ENCODE measurements at regions of chr3 and their contacts with region 1.

Region 1: GRCh38 chr3:193114431-193115340 is 126.3 kb upstream of the PLAAT1 start:
- DNase-seq: no peak
- H3K4me3 ChIP-seq: no peak overlapping the region
- H3K27ac ChIP-seq: no peak overlapping the region
- H3K4me1 ChIP-seq: peaks cover 0 to 5% (median 1%) of the 10 kb centered on the region in 4 experiments; a peak in 1 of 7 replicates
- H3K27me3 ChIP-seq: no peaks in the 10 kb centered on the region
- CTCF ChIP-seq: no peak
- EP300 ChIP-seq: no peak
- POLR2A ChIP-seq: no peak
- RAD21 ChIP-seq: no peak

Region 2: DNA sequence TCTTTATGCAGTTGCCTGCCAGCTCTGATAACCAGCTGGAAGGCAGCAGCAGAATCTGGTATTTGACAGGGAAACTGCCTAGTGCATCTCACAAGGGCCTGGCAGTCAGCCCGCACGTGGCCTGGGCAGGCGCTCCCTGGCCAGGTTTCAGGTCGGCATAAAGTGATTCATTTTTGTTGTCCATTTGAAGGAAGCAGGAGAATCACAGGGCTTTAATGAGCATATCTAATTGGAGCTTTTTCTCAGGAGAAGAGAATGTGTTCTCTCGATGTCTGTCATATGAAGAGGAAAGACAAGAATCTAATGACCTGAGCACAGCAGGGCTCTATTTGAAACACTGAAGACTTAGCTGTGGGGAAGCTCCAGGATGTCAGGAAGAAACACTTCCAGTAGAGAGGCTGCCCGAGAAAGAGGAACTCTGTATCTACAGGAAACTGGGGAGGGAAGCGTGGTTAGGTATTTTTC is 98.2 kb before region 1 on chr3:
- CTCF ChIA-PET with region 1: no interaction called
- POLR2A ChIA-PET with region 1: no interaction called
- DNase-seq: peak in 1 of 2 experiments; percentile 54
- H3K4me3 ChIP-seq: peak overlapping the region in 1 of 4 experiments; percentile 30; a peak in 1 of 8 replicates
- H3K27ac ChIP-seq: no peak overlapping the region
- H3K4me1 ChIP-seq: peaks cover 0 to 6% (median 3%) of the 10 kb centered on the region in 4 experiments; a peak in 4 of 7 replicates
- H3K27me3 ChIP-seq: no peaks in the 10 kb centered on the region
- CTCF ChIP-seq: no peak
- EP300 ChIP-seq: no peak
- POLR2A ChIP-seq: no peak
- RAD21 ChIP-seq: no peak

Region 3: DNA sequence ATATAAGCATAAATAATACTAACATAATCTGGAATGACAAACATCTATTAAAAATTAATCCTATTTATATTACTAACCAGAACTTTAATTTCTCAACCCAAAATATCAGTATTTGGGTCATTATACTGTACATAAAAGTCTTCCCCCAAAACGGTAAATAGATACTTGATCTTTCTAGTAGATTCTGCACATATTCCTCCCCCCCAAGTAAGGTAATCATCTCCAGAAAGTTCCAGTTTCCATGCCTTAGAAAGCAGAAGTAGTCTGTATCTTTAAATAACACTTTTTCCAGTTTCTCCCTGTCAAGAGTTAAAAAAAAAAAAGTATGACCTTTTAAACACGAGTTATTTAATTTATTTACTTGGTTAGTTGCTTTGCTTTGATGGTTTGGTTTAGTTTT is 46.3 kb before region 1 on chr3:
- CTCF ChIA-PET with region 1: no interaction called
- POLR2A ChIA-PET with region 1: no interaction called
- DNase-seq: no peak
- H3K4me3 ChIP-seq: no peak overlapping the region
- H3K27ac ChIP-seq: no peak overlapping the region
- H3K4me1 ChIP-seq: no peaks in the 10 kb centered on the region
- H3K27me3 ChIP-seq: no peaks in the 10 kb centered on the region
- CTCF ChIP-seq: no peak
- EP300 ChIP-seq: no peak
- POLR2A ChIP-seq: no peak
- RAD21 ChIP-seq: no peak

Region 4: GRCh38 chr3:193132964-193133363 is 18.3 kb after region 1 on chr3:
- CTCF ChIA-PET with region 1: interaction called, 13 read pairs
- POLR2A ChIA-PET with region 1: no interaction called
- DNase-seq: no peak
- H3K4me3 ChIP-seq: no peak overlapping the region
- H3K27ac ChIP-seq: no peak overlapping the region
- H3K4me1 ChIP-seq: peaks cover 0 to 6% (median 0%) of the 10 kb centered on the region in 4 experiments; a peak in 1 of 7 replicates
- H3K27me3 ChIP-seq: no peaks in the 10 kb centered on the region
- CTCF ChIP-seq: no peak
- EP300 ChIP-seq: no peak
- POLR2A ChIP-seq: no peak
- RAD21 ChIP-seq: no peak